Common myeloid progenitor, CD34-positive (primary cell): ENCODE measurements at regions of chr2 and their contacts with region 1.

Region 1: GRCh38 chr2:219543601-219544358 is at the starts of genes CHPF and TMEM198:
- DNase-seq: peak; percentile 95 to 98 (median 97)
- H3K4me3 ChIP-seq: peak within 1 kb of the TSS; percentile 39 to 79 (median 62)
- H3K27ac ChIP-seq: no peak within 1 kb of the TSS
- H3K4me1 ChIP-seq: peaks cover 0 to 29% (median 23%) of the 10 kb centered on the region in 4 experiments
- H3K27me3 ChIP-seq: peaks cover 0 to 38% (median 24%) of the 10 kb centered on the region in 5 experiments

Region 2: GRCh38 chr2:219530048-219530963 is 13.5 kb before region 1 on chr2:
- CTCF ChIA-PET with region 1: interaction called, 81 read pairs
- POLR2A ChIA-PET with region 1: no interaction called
- DNase-seq: peak; percentile 84 to 92 (median 89)
- H3K4me3 ChIP-seq: no peak overlapping the region
- H3K27ac ChIP-seq: no peak overlapping the region
- H3K4me1 ChIP-seq: peaks cover 0 to 7% (median 3%) of the 10 kb centered on the region in 4 experiments
- H3K27me3 ChIP-seq: peaks cover 4 to 71% (median 38%) of the 10 kb centered on the region in 5 experiments

Region 3: DNA sequence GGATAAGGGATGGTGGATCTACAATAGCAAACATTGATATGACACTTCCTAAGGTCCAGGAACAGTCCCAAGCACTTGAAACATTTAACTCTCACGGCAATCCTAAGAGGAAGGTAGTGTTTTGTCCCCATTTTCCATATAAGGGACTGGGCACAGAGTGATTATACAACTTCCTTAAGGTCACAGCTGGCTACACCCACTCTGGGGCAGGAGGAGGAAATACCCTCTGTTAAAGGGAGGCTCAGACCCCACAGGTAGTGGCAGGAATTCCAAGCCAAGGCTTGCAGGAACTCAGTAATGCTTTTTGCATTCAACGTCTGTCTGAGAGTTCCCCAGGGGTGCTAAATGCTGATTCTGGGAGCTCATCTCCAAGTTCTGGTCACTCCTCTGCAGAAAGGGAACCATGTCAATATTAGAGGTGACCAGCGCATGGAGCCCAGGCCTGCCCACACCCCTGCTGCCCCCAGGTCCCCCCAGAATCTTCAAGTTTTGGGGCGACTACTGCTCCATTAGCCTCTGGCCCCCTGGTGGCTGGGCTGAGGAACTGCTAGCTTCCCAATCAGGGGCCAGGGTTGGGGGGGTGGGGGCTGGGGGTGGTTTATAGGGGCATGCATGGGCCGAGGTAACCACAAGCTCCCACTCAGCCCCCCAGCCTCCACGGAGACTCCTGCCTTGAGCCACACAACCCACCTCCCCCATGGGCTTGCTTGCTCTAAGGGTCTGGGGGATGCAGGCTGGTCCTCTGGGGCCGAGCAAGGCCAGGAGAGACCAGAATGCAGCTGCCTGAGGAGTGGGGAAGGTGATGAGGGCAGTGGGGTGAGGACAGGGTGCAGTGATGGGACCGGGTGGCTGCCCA is 16.5 kb after region 1 on chr2:
- CTCF ChIA-PET with region 1: interaction called, 117 read pairs
- POLR2A ChIA-PET with region 1: no interaction called
- DNase-seq: peak in 1 of 3 donors; percentile 26
- H3K4me3 ChIP-seq: no peak overlapping the region
- H3K27ac ChIP-seq: no peak overlapping the region
- H3K4me1 ChIP-seq: no peaks in the 10 kb centered on the region
- H3K27me3 ChIP-seq: no peaks in the 10 kb centered on the region

Region 4: GRCh38 chr2:219571311-219572236 is 27.8 kb after region 1 on chr2 and contains the start of gene OBSL1:
- CTCF ChIA-PET with region 1: interaction called, 117 read pairs
- POLR2A ChIA-PET with region 1: no interaction called
- DNase-seq: peak; percentile 52 to 63 (median 59)
- H3K4me3 ChIP-seq: peak within 1 kb of the TSS; percentile 53 to 86 (median 69)
- H3K27ac ChIP-seq: peak within 1 kb of the TSS in 1 of 2 experiments; percentile 58
- H3K4me1 ChIP-seq: peaks cover 0 to 17% (median 15%) of the 10 kb centered on the region in 4 experiments
- H3K27me3 ChIP-seq: no peaks in the 10 kb centered on the region

Region 5: DNA sequence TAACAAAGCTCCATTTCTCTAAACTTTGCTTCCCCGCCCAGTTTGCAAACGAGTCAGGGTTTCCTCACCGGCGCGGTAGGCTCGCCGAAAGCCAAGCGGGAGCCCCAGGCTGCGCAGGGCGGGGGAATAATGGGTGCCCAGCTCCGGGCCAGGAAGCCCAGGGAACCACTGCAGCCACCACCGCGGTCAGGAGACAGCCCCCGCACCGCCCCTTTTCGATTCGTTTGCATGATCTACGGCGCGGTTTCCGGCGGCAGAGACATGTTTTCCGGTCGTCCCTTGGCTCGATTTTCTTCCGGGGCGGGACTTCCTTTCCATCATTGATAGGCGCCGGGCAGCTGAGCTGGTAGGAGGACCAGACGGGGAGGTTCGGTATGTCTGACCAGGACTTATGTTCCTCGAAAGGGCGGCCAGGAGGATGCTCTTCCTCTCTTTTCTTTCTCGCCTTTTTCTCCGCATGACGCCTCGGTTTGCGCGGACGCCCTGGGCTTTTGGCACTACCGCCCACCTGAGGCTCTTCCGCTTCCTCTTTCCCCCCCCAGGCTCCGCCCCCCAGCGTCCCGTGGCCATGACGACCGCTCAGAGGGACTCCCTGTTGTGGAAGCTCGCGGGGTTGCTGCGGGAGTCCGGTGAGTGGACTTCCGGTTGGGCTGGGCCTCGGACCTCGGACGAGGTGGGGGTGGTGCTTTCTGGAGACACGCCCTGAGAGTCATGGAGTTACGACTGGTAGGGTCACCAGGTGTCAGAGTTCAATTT is 54.0 kb after region 1 on chr2 and contains the start of gene STK11IP:
- CTCF ChIA-PET with region 1: interaction called, 23 read pairs
- POLR2A ChIA-PET with region 1: no interaction called
- DNase-seq: peak; percentile 94 to 95 (median 94)
- H3K4me3 ChIP-seq: peak within 1 kb of the TSS; percentile 72 to 98 (median 92)
- H3K27ac ChIP-seq: peak within 1 kb of the TSS; percentile 25 to 80
- H3K4me1 ChIP-seq: peaks cover 2 to 34% (median 22%) of the 10 kb centered on the region in 4 experiments
- H3K27me3 ChIP-seq: no peaks in the 10 kb centered on the region

Region 6: GRCh38 chr2:219642465-219643080 is 98.8 kb after region 1 on chr2:
- CTCF ChIA-PET with region 1: interaction called, 125 read pairs
- POLR2A ChIA-PET with region 1: no interaction called
- DNase-seq: peak; percentile 97 to 98 (median 97)
- H3K4me3 ChIP-seq: peak overlapping the region in 3 of 7 experiments; percentile 26 to 60 (median 45)
- H3K27ac ChIP-seq: no peak overlapping the region
- H3K4me1 ChIP-seq: peaks cover 0 to 11% (median 8%) of the 10 kb centered on the region in 4 experiments
- H3K27me3 ChIP-seq: no peaks in the 10 kb centered on the region

Region 7: DNA sequence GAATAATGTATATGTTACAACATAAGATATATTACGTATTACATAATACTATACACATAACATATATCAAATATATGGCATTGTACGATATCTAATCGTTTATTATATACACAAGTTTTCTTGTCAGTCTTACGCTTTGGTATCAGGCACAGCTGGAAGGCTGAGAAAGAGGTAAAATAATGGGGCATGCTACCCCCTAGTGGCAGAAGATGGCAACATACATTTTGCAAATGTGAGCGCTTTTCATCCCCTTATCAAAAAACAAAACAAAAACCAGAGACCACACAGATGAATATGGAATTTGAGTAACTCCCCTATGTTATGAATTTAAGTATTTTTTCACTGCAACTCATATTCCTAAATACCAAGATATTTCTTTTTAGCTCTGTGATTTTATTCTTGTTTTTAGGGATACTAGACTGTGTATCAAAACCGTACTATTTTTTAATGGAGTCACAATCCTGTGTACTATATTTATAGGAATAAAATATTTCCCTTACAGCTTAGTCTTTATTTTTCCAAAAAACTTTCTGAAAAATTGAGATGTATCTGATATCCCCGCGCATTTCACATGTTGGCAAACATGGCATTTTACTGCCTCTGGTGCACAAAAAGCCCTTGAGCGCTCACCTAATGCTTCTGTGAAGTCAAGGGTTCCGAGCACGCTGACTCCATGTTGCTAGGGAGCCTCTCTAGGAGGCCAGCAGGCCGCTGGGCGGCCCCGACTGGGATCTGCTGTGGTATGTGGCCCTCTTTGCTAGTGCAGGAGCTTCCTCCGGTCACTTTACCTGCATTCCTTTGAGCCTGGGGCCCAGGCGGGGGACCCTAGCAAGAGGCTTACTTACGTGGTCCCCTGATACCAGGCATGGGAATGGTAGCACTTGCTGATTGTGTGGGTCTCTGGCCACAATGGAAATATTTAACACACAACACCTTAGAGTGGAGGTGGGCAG is 146.2 kb after region 1 on chr2:
- CTCF ChIA-PET with region 1: interaction called, 20 read pairs
- POLR2A ChIA-PET with region 1: no interaction called
- DNase-seq: peak; percentile 57 to 84 (median 76)
- H3K4me3 ChIP-seq: no peak overlapping the region
- H3K27ac ChIP-seq: no peak overlapping the region
- H3K4me1 ChIP-seq: peaks cover 0 to 4% (median 0%) of the 10 kb centered on the region in 4 experiments
- H3K27me3 ChIP-seq: peaks cover 0 to 19% (median 13%) of the 10 kb centered on the region in 5 experiments